ENCODE measurements at regions of chr2 and their contacts with region 1.

Region 1: DNA sequence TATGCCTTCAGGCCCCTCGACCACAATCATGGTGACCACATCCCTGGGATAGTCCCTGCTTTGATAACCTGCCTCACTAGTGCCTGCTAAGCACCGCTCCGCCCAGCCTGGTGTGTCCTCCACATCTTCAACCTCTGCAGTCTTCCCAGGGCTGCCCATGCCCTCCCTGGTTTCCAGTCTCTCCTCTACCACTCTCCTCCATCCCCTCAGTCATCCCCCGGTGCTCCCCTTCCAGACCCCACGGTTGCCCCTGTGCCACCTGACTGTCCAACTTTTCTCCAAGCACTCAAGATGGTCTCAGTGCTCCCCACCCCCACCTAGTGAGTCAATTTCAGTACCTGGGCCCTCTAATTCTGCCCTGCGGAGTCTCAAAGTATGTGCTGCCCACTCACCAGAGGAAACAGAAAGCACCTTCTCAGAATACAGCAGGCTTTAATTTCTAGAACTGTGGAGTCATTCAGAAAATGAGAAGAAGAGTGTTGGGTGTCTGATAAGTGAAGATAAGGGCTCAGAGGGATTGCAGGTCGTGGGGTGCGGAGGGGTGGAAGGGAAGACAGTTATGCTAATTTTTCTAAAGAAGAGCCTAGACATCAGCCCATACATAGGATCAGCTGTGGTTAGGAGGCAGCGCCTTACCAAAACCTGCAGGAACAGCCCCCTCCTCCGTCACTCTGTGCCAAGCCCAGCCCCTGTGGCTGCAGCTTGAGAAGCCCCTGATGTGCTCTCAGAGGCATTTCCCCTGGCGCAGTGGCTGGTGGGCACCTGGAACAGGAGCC is 53.6 kb upstream of the CAB39 start:
- DNase-seq: peak; percentile 91
- H3K4me3 Mint-ChIP-seq: peak overlapping the region; percentile 88
- H3K27ac Mint-ChIP-seq: peak overlapping the region; percentile 98
- H3K4me1 Mint-ChIP-seq: peaks cover 82% of the 10 kb centered on the region
- H3K27me3 Mint-ChIP-seq: no peaks in the 10 kb centered on the region

Region 2: GRCh38 chr2:230268606-230269243 is 390.3 kb before region 1 on chr2:
- intact Hi-C with region 1: loop called (anchors 5 kb)
- DNase-seq: peak; percentile 63
- H3K4me3 Mint-ChIP-seq: peak overlapping the region; percentile 68
- H3K27ac Mint-ChIP-seq: peak overlapping the region; percentile 80
- H3K4me1 Mint-ChIP-seq: peaks cover 63% of the 10 kb centered on the region
- H3K27me3 Mint-ChIP-seq: no peaks in the 10 kb centered on the region

Region 3: DNA sequence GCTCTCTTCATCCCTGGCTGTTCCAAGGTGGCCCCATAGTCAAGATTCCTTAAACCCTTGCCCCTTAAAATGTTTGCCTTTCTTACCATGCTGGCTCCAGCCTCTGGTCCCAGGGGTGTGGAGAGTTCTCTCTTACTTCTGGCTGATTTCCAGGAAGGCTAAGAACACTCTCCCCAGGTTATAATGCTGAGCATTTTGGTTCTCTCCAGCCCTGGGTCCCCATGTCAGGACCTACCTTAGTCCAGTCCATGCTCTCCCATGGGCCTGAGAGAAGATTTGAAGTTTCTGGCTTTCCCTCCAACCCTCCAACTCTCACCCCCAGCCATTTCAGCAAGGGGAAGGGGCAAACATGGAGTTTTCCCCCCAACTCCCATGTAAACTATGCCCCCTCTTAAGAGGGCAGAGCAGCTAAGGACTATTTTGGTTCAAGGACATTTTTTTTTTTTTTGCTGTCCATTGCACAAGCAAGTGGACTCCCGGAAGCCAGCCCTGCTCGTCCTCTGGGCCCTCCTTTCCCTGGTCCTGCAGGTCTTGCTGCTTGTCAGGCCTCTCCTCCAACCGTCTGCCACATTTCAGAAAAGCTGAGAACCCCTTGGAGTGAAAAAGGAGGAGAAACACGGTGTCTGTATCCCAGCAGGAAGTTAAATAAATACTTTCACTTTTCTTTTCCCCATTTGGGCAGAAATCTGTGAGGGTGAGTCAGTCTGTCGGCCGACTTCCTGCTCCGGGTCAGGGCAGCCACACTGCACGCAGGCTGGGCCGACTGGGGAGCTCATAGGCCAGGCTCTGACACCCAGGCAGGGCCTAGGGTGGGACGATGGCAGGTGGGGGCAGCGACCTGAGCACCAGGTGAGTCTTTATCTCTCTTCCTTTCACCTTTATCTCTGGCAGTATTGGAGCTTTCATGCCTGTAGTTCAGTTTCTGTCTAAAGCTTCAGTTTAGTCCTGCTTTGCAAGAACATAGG is 332.3 kb before region 1 on chr2 and contains the start of gene SP140L:
- intact Hi-C with region 1: loop called (anchors 5 kb)
- DNase-seq: peak; percentile 94
- H3K4me3 Mint-ChIP-seq: peak within 1 kb of the TSS; percentile 92
- H3K27ac Mint-ChIP-seq: peak within 1 kb of the TSS; percentile 90
- H3K4me1 Mint-ChIP-seq: peaks cover 67% of the 10 kb centered on the region
- H3K27me3 Mint-ChIP-seq: no peaks in the 10 kb centered on the region
- total RNA-seq, gene SP140L: 48.9 and 49.1 TPM in 2 replicates

Region 4: GRCh38 chr2:230582851-230583283 is 76.2 kb before region 1 on chr2:
- intact Hi-C with region 1: loop called (anchors 2 kb)
- DNase-seq: peak; percentile 72
- H3K4me3 Mint-ChIP-seq: peak overlapping the region; percentile 39
- H3K27ac Mint-ChIP-seq: peak overlapping the region; percentile 85
- H3K4me1 Mint-ChIP-seq: peaks cover 31% of the 10 kb centered on the region
- H3K27me3 Mint-ChIP-seq: no peaks in the 10 kb centered on the region

Region 5: GRCh38 chr2:230636684-230637271 is 22.3 kb before region 1 on chr2:
- intact Hi-C with region 1: loop called (anchors 1 kb)
- DNase-seq: peak; percentile 67
- H3K4me3 Mint-ChIP-seq: no peak overlapping the region
- H3K27ac Mint-ChIP-seq: peak overlapping the region; percentile 85
- H3K4me1 Mint-ChIP-seq: peaks cover 15% of the 10 kb centered on the region
- H3K27me3 Mint-ChIP-seq: no peaks in the 10 kb centered on the region

Region 6: DNA sequence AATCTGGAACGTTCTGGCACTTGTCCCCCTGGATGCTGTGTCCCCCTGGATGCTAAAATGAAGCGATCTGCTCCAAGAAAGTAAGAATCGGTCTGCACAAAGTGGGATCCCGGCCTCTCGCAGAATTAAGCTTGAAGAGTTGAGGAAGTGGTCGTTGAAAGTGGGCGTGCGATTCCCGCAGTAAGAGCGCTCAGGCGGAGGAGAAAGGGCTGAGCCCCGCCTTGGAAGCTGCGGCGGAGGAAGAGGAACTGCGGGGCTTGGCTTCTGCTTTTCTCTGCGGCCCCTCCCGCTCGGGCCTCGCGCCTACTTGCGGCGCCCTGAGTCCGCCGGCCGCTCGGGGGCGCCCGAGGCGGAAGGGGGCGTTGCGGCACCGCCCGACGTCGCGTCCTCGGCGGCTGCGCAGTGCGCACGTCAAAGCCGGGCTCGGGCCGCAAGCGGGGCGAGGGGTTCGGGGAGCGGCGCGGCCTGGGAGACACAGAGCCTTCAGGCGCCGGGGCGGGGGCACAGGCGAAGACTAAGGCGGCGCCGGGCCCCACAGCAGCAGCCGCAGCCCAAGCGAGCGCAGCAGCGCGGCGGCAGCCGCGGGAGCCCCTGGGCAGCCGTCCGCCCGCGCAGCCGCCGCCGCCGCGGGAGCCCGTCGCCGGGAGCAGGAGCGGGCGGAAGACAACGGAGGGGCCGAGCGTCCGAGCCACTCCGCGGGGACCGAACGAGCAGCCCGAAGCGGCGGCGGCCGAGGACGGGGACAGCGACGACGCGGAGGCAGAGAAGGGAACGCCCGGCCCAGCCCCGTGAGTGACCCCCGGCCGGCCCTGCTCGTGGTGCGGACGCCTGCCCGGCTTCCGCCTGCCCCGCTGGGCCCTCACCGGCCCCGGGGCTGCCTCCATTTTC is 53.6 kb after region 1 on chr2 and contains the start of gene CAB39:
- intact Hi-C with region 1: loop called (anchors 1 kb)
- DNase-seq: peak; percentile 98
- H3K4me3 Mint-ChIP-seq: peak within 1 kb of the TSS; percentile 92
- H3K27ac Mint-ChIP-seq: peak within 1 kb of the TSS; percentile 91
- H3K4me1 Mint-ChIP-seq: peaks cover 28% of the 10 kb centered on the region
- H3K27me3 Mint-ChIP-seq: no peaks in the 10 kb centered on the region
- total RNA-seq, gene CAB39: 166 and 168 TPM in 2 replicates

Region 7: DNA sequence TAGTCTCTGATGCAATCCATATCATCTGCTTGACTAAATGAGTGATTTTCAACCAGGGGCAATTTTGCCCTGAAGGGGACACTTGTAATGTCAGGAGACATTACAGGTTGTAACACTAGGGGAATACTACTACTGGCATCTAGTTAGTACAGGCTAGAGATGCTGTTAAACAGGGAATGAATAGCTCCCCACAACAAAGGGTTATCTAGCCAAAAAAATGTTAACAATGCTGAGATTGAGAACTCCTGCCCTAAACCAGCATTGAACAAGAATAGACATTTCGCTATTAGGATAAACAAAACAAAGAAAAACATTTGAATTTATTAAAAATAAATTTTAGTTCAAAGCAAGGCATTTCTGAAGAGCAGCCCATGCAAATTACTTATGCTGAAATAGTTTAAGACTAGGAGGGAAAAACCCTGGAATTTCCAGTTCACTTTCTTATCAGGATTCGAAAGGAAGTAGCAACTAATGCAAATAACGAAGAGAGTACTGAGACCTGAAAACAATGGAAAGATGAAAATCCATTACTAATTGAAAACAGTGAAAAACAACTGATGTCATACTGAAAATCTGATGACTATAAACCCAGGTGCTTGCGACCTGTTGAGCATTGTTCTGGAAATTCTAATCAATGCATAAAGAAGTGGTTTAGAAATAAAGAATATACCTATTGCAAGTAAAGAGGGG is 106.7 kb after region 1 on chr2:
- intact Hi-C with region 1: no loop called
- DNase-seq: no peak
- H3K4me3 Mint-ChIP-seq: no peak overlapping the region
- H3K27ac Mint-ChIP-seq: peak overlapping the region; percentile 73
- H3K4me1 Mint-ChIP-seq: peaks cover 46% of the 10 kb centered on the region
- H3K27me3 Mint-ChIP-seq: no peaks in the 10 kb centered on the region